ENCODE measurements at regions of chr20 and their contacts with region 1.

Region 1: GRCh38 chr20:11454966-11455799 is 462.5 kb upstream of the BTBD3 start:
- DNase-seq: no peak
- ATAC-seq: peak; percentile 66
- H3K4me3 ChIP-seq: no peak overlapping the region
- H3K27ac ChIP-seq: no peak overlapping the region
- H3K4me1 ChIP-seq: no peaks in the 10 kb centered on the region
- H3K27me3 ChIP-seq: no peaks in the 10 kb centered on the region
- CTCF ChIP-seq: no peak
- EP300 ChIP-seq: peak in 1 of 2 experiments; percentile 62; a peak in 1 of 4 replicates
- POLR2A ChIP-seq: no peak
- RAD21 ChIP-seq: no peak

Region 2: DNA sequence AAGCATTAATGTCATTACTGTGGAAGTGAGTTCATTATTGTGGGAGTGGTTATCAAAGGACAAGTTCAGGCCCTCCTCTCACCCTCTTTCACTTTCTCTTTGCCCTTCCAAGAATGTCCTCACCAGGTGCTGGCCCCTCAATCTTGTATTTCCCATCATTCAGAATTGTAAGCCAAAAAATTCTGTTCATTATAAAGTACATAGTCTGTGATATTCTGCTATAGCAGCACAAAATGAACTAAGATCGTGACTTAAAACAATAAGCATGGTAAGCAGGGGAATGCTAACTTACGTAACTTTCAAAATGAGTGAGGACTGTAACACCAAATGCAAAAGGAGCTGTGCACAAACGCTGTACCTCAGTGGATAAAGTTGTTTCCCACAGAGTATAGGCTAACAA is 53.2 kb before region 1 on chr20:
- CTCF ChIA-PET with region 1: no interaction called
- POLR2A ChIA-PET with region 1: interaction called, 5 read pairs
- RAD21 ChIA-PET with region 1: interaction called, 8 read pairs
- SMC1A ChIA-PET with region 1: interaction called, 10 read pairs
- in situ Hi-C with region 1: no loop called
- intact Hi-C with region 1: loop called (anchors 2 kb)
- DNase-seq: peak; percentile 27
- ATAC-seq: peak; percentile 93
- H3K4me3 ChIP-seq: peak overlapping the region; percentile 28; the same call in 1 of the 2 replicates
- H3K27ac ChIP-seq: no peak overlapping the region
- H3K4me1 ChIP-seq: no peaks in the 10 kb centered on the region
- H3K27me3 ChIP-seq: no peaks in the 10 kb centered on the region
- CTCF ChIP-seq: no peak
- EP300 ChIP-seq: no peak
- POLR2A ChIP-seq: no peak
- RAD21 ChIP-seq: no peak

Region 3: DNA sequence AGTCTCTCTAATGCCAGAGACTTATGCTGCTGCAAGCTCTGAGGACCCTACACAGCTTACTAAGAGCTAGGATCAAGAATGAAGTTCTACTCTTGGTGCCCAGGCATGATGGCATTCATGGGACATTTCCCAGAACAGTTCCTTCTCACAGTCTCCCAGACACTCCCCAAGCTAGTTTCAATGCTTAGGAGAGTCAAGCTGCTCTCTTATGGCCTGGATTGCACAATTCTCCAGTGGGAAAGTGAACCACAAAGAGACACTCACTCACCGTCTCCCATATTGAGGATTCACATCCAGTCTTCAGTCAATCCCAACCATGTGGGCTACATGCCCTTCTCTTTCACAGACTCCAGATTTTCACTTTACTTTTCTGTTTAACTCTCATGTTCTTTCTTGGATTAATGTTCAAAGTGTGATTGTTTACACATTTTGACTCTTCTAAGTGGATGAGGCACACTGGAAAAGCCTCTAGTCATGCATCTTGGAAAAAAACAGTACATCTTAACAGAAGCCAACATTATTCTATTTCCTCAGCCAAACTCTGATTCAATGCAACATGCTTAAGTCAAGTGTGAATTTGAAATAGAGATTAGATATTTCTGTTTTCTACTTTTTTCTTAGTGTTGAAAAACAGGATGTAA is 14.7 kb after region 1 on chr20:
- CTCF ChIA-PET with region 1: interaction called, 5 read pairs
- POLR2A ChIA-PET with region 1: interaction called, 3 read pairs
- RAD21 ChIA-PET with region 1: interaction called, 4 read pairs
- SMC1A ChIA-PET with region 1: interaction called, 30 read pairs
- in situ Hi-C with region 1: no loop called
- intact Hi-C with region 1: no loop called
- DNase-seq: no peak
- ATAC-seq: no peak
- H3K4me3 ChIP-seq: no peak overlapping the region
- H3K27ac ChIP-seq: no peak overlapping the region
- H3K4me1 ChIP-seq: no peaks in the 10 kb centered on the region
- H3K27me3 ChIP-seq: no peaks in the 10 kb centered on the region
- CTCF ChIP-seq: no peak
- EP300 ChIP-seq: no peak
- POLR2A ChIP-seq: no peak
- RAD21 ChIP-seq: no peak

Region 4: DNA sequence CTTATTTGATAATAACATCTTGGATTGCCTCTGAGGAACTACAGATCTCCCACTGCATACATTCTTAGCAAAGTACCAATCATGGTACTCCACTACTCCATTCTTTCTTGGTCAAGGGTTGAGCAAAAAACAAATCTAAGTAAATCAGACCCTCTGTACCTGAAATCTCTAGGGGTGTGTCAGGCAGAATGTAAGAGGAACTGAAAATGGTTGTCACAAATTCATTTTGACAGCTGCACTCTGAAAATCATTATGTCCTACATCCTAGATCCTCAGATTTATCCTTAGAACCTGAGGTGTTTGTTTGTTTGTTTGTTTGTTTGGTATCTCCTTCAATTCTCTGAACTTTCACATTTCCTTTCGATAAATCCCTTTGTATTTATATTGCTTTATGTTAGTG is 29.3 kb after region 1 on chr20:
- CTCF ChIA-PET with region 1: interaction called, 13 read pairs
- POLR2A ChIA-PET with region 1: interaction called, 4 read pairs
- RAD21 ChIA-PET with region 1: interaction called, 29 read pairs
- SMC1A ChIA-PET with region 1: interaction called, 14 read pairs
- in situ Hi-C with region 1: no loop called
- intact Hi-C with region 1: no loop called
- DNase-seq: no peak
- ATAC-seq: peak; percentile 82
- H3K4me3 ChIP-seq: no peak overlapping the region
- H3K27ac ChIP-seq: no peak overlapping the region
- H3K4me1 ChIP-seq: no peaks in the 10 kb centered on the region
- H3K27me3 ChIP-seq: no peaks in the 10 kb centered on the region
- CTCF ChIP-seq: no peak
- EP300 ChIP-seq: no peak
- POLR2A ChIP-seq: no peak
- RAD21 ChIP-seq: no peak

Region 5: DNA sequence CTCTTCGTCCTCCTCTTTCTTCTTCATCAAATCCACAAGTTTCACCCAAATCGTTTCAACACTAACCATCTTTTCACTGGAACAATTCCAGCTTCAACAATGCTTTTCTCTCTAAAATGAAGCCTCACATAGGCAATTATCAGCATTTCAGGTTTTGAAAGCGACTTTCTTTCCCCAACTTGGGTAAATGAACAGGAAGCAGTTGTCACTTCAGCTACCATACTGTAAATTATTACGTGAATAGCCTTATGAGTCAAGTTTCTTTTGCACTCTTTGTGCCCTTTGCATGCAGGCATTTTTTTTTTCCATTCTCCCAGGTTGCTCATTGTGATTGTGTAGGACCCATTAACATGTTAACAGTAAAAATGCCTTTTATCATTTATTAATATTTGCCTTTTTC is 340.8 kb after region 1 on chr20:
- CTCF ChIA-PET with region 1: no interaction called
- POLR2A ChIA-PET with region 1: no interaction called
- RAD21 ChIA-PET with region 1: no interaction called
- SMC1A ChIA-PET with region 1: no interaction called
- in situ Hi-C with region 1: no loop called
- intact Hi-C with region 1: no loop called
- DNase-seq: no peak
- ATAC-seq: no peak
- H3K4me3 ChIP-seq: no peak overlapping the region
- H3K27ac ChIP-seq: no peak overlapping the region
- H3K4me1 ChIP-seq: no peaks in the 10 kb centered on the region
- H3K27me3 ChIP-seq: no peaks in the 10 kb centered on the region
- CTCF ChIP-seq: no peak
- EP300 ChIP-seq: no peak
- POLR2A ChIP-seq: no peak
- RAD21 ChIP-seq: no peak